H1 (cell line): ENCODE measurements at regions of chr2 and their contacts with region 1.

Region 1: DNA sequence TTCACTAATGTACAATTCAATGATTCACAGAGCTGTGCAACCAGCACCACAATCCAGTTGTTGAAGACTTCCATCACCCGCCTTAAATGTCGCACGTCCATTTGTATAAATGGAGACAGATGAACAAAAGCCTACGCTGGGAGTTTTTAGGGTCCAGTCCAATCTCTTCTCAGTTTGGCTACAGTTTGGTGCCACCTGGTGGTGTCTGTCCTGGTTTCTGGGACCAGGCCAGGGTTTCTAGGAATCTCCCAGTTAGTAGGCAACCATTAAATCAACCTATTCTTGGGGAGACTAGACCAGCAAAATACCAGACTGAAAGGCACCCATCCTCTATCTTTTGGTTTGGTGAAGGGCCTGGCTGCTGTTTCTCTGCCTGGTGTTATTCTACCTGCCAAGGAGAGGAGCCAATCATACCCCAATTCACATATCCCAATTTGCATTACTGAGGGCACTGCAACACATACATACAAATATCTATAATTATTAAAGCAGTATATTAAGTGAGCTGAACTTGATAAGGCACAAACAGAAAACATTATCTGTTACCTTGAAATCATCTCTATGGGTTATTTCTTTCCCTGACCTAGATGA is 3.2 kb upstream of the DDX1 start:
- DNase-seq: peak; percentile 3 to 81
- H3K4me3 ChIP-seq: no peak overlapping the region
- H3K27ac ChIP-seq: no peak overlapping the region
- H3K4me1 ChIP-seq: peaks cover 0 to 3% (median 1%) of the 10 kb centered on the region in 4 experiments; a peak in 3 of 7 replicates
- H3K27me3 ChIP-seq: no peaks in the 10 kb centered on the region
- CTCF ChIP-seq: peak; percentile 52 to 72 (median 64)
- EP300 ChIP-seq: no peak
- POLR2A ChIP-seq: no peak
- RAD21 ChIP-seq: peak; percentile 78 to 84

Region 2: GRCh38 chr2:15485949-15486348 is 102.5 kb before region 1 on chr2:
- CTCF ChIA-PET with region 1: no interaction called
- POLR2A ChIA-PET with region 1: no interaction called
- DNase-seq: no peak
- H3K4me3 ChIP-seq: no peak overlapping the region
- H3K27ac ChIP-seq: no peak overlapping the region
- H3K4me1 ChIP-seq: no peaks in the 10 kb centered on the region
- H3K27me3 ChIP-seq: no peaks in the 10 kb centered on the region
- CTCF ChIP-seq: no peak
- EP300 ChIP-seq: no peak
- POLR2A ChIP-seq: no peak
- RAD21 ChIP-seq: no peak

Region 3: GRCh38 chr2:15570104-15570503 is 18.3 kb before region 1 on chr2:
- CTCF ChIA-PET with region 1: interaction called, 51 read pairs
- POLR2A ChIA-PET with region 1: no interaction called
- DNase-seq: no peak
- H3K4me3 ChIP-seq: no peak overlapping the region
- H3K27ac ChIP-seq: no peak overlapping the region
- H3K4me1 ChIP-seq: no peaks in the 10 kb centered on the region
- H3K27me3 ChIP-seq: no peaks in the 10 kb centered on the region
- CTCF ChIP-seq: no peak
- EP300 ChIP-seq: no peak
- POLR2A ChIP-seq: no peak
- RAD21 ChIP-seq: no peak